KBM-7 (cell line): ENCODE measurements at regions of chrX and their contacts with region 1.

Region 1: GRCh38 chrX:135437867-135438733 is 16.4 kb downstream of the SMIM10L2A start:
- DNase-seq: peak; percentile 24

Region 2: DNA sequence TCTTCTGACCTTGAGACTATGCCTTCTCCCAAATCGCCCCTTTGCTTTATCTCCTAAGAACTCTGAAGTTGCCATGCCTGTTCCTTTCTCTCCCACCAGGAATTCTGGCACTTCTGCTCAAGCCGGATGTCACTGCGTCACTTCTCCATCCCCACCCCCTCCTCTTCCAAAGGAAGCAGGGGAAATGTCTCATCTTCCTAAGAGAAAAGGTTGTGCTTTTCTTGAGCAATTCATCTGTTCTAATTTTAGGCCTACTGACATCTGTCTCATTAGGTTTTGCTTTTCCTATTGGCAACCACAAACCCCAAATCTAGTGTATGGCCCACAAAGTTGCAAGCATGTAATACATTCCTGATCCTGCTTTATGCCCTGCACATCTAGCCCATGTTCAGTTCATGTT is 616.7 kb before region 1 on chrX:
- in situ Hi-C with region 1: no loop called
- DNase-seq: peak; percentile 47

Region 3: DNA sequence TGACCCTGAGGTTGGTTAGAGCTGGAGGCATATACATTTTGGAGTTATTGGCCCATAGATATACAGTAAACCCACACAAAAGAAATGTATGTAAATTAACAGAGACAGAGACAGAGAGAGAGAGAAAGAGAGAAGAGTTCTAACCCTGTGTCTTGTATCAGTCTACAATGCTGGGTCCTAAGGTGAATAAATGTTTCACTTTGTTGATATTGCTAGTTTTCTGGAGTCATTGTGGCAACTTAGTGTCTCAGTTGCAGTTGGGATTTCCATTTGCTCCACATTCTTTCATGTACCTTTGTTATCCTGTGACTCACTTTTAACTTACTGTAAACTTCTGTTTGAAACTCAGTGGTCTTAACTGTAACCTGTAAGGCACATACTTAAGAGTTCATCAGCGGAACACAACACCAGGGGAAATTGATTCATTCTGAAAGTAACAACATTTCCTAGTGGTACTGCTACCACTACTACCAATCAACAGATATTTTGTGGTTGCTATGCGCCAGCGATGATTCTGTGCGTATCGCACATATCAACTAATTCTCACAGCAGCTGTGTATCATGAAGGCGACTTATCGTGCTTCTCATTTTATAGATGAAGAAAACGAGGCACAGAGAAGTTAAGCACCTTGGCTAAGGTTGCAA is 224.8 kb before region 1 on chrX:
- in situ Hi-C with region 1: loop called (anchors 25 kb)
- DNase-seq: no peak

Region 4: DNA sequence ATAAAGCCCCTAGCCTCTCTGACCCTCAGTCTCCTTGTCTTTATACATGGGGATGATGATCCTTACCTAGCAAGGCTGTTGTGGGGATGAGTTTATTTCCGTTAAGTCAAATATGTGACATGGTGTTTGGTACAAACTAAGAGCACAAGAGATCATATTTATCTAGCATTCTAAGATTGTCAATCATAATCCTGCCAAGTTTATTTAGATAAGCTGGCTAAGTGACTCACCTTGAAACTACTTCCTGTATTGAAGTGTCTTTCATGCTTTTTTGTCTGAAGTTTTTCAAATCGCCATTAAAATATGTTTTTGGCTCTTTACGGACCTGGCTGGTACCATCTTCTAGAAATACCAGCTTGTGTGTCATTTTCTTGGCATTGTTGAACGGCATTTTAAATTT is 782.4 kb after region 1 on chrX:
- in situ Hi-C with region 1: no loop called
- DNase-seq: no peak